ENCODE measurements at regions of chr22 and their contacts with region 1.

Region 1: GRCh38 chr22:25346859-25347751 is 127.7 kb downstream of the CRYBB2 start:
- DNase-seq: no peak
- H3K4me3 ChIP-seq: no peak overlapping the region
- H3K27me3 ChIP-seq: no peaks in the 10 kb centered on the region
- CTCF ChIP-seq: no peak

Region 2: GRCh38 chr22:25362215-25362882 is 15.2 kb after region 1 on chr22:
- CTCF ChIA-PET with region 1: interaction called, 24 read pairs
- POLR2A ChIA-PET with region 1: no interaction called
- DNase-seq: no peak
- H3K4me3 ChIP-seq: no peak overlapping the region
- H3K27me3 ChIP-seq: no peaks in the 10 kb centered on the region
- CTCF ChIP-seq: peak; percentile 91

Measured in BJ (cell line).